Activated CD4-positive, alpha-beta T cell treated with anti-CD3 and anti-CD28 coated beads, Interleukin-2, amount 10 ng/mL, durations not matched to agents 24 days and 14 days (primary cell): ENCODE measurements at regions of chr9 and their contacts with region 1.

Region 1: GRCh38 chr9:126514047-126514821 is 99.5 kb upstream of the LMX1B start:
- DNase-seq: peak; percentile 90
- H3K4me3 Mint-ChIP-seq: no peak overlapping the region
- H3K27ac Mint-ChIP-seq: no peak overlapping the region
- H3K4me1 Mint-ChIP-seq: peaks cover 22% of the 10 kb centered on the region
- H3K27me3 Mint-ChIP-seq: peaks cover 66% of the 10 kb centered on the region

Region 2: GRCh38 chr9:126411225-126411947 is 102.8 kb before region 1 on chr9:
- intact Hi-C with region 1: no loop called
- DNase-seq: peak; percentile 86
- H3K4me3 Mint-ChIP-seq: peak overlapping the region; percentile 47
- H3K27ac Mint-ChIP-seq: peak overlapping the region; percentile 45
- H3K4me1 Mint-ChIP-seq: peaks cover 39% of the 10 kb centered on the region
- H3K27me3 Mint-ChIP-seq: peaks cover 5% of the 10 kb centered on the region

Region 3: GRCh38 chr9:126471084-126471624 is 43.1 kb before region 1 on chr9:
- intact Hi-C with region 1: loop called (anchors 1 kb)
- DNase-seq: peak; percentile 94
- H3K4me3 Mint-ChIP-seq: peak overlapping the region; percentile 64
- H3K27ac Mint-ChIP-seq: peak overlapping the region; percentile 78
- H3K4me1 Mint-ChIP-seq: peaks cover 47% of the 10 kb centered on the region
- H3K27me3 Mint-ChIP-seq: peaks cover 52% of the 10 kb centered on the region

Region 4: GRCh38 chr9:126499068-126499910 is 14.9 kb before region 1 on chr9:
- intact Hi-C with region 1: loop called (anchors 2 kb)
- DNase-seq: peak; percentile 82
- H3K4me3 Mint-ChIP-seq: peak overlapping the region; percentile 57
- H3K27ac Mint-ChIP-seq: no peak overlapping the region
- H3K4me1 Mint-ChIP-seq: peaks cover 2% of the 10 kb centered on the region
- H3K27me3 Mint-ChIP-seq: peaks cover 14% of the 10 kb centered on the region

Region 5: GRCh38 chr9:126558051-126558665 is 43.9 kb after region 1 on chr9:
- intact Hi-C with region 1: loop called (anchors 5 kb)
- DNase-seq: peak; percentile 90
- H3K4me3 Mint-ChIP-seq: no peak overlapping the region
- H3K27ac Mint-ChIP-seq: no peak overlapping the region
- H3K4me1 Mint-ChIP-seq: no peaks in the 10 kb centered on the region
- H3K27me3 Mint-ChIP-seq: peaks cover 19% of the 10 kb centered on the region